ENCODE measurements at regions of chr13 and their contacts with region 1.

Region 1: DNA sequence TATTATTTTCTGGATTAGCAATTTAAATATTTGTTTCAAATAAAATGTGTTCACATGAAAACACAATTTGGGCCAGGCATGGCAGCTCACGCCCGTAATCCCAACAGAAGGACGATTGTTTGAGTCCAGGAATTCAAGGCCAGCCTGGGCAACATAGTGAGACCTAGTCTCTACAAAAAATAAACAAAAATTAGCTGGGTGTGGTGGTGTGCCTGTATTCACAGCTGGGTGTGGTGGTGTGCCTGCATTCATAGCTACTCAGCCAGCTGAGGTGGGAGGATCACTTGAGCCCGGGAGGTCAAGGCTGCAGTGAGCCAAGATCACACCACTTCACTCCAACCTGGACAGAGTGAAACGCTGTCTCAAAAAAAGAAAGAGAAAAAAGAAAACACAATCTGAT is 46.4 kb downstream of the KPNA3 start:
- DNase-seq: no peak
- ATAC-seq: no peak
- H3K4me3 ChIP-seq: no peak overlapping the region
- H3K4me3 Mint-ChIP-seq: no peak overlapping the region
- H3K27ac ChIP-seq: no peak overlapping the region
- H3K27ac Mint-ChIP-seq: no peak overlapping the region
- H3K4me1 ChIP-seq: no peaks in the 10 kb centered on the region
- H3K4me1 Mint-ChIP-seq: peaks cover 18% of the 10 kb centered on the region
- H3K27me3 ChIP-seq: no peaks in the 10 kb centered on the region
- H3K27me3 Mint-ChIP-seq: no peaks in the 10 kb centered on the region
- CTCF ChIP-seq: no peak

Region 2: GRCh38 chr13:49569956-49570689 is 176.0 kb before region 1 on chr13:
- CTCF ChIA-PET with region 1: no interaction called
- POLR2A ChIA-PET with region 1: no interaction called
- intact Hi-C with region 1: no loop called
- DNase-seq: peak in 1 of 14 experiments; percentile 42
- ATAC-seq: peak; percentile 65
- H3K4me3 ChIP-seq: no peak overlapping the region
- H3K4me3 Mint-ChIP-seq: no peak overlapping the region
- H3K27ac ChIP-seq: peak overlapping the region in 1 of 2 donors; percentile 52
- H3K27ac Mint-ChIP-seq: peak overlapping the region; percentile 26
- H3K4me1 ChIP-seq: peaks cover 18% of the 10 kb centered on the region
- H3K4me1 Mint-ChIP-seq: peaks cover 26% of the 10 kb centered on the region
- H3K27me3 ChIP-seq: no peaks in the 10 kb centered on the region
- H3K27me3 Mint-ChIP-seq: no peaks in the 10 kb centered on the region
- CTCF ChIP-seq: no peak

Region 3: GRCh38 chr13:49731766-49732165 is 14.3 kb before region 1 on chr13:
- CTCF ChIA-PET with region 1: interaction called, 3 read pairs
- POLR2A ChIA-PET with region 1: no interaction called
- intact Hi-C with region 1: loop called in 1 of 2 experiments (anchors 2 kb)
- DNase-seq: no peak
- ATAC-seq: no peak
- H3K4me3 ChIP-seq: no peak overlapping the region
- H3K4me3 Mint-ChIP-seq: no peak overlapping the region
- H3K27ac ChIP-seq: no peak overlapping the region
- H3K27ac Mint-ChIP-seq: no peak overlapping the region
- H3K4me1 ChIP-seq: no peaks in the 10 kb centered on the region
- H3K4me1 Mint-ChIP-seq: no peaks in the 10 kb centered on the region
- H3K27me3 ChIP-seq: no peaks in the 10 kb centered on the region
- H3K27me3 Mint-ChIP-seq: no peaks in the 10 kb centered on the region
- CTCF ChIP-seq: no peak